ENCODE measurements at regions of chr7 and their contacts with region 1.

Region 1: DNA sequence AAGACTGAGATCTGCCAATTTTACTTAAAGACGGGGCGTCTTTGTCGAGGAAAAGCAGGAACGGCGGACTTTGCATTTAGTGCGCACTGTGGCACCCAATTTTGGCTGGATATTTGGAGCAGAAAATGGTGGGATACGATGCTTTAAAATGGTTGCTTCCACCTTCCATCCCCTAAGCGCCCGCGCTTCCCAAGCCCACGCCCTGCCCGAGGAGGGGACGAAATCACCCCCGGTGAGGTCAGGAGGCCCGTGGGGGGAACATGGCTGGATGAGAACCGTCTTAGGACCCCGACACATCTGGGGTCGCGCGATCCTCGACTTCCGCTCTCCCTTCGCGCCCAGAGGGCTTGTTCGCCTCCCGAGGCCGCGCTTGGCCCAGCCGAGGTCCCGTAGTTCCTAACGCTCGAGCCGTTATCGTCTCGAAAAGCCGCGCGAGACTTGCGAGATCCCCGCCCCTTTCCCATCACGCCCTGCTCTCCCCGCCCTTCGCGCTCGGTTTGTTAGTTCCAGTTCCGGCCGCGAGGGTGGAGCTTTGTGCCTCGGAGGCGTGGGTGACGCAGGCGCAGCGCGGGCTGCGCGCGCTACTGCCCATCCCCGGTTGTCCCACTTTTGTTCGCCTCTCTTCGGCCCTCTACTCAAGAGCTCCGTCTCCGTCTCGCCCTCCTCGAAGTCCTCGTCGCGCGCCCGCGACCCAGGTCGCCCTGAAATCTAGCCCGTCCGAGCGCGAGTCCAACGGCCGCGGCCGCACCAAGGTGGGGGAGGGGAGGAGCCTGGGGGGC is at the start of gene SRRT:
- DNase-seq: peak; percentile 99
- H3K4me3 Mint-ChIP-seq: peak within 1 kb of the TSS; percentile 98
- H3K27ac Mint-ChIP-seq: peak within 1 kb of the TSS; percentile 97
- H3K4me1 Mint-ChIP-seq: peaks cover 60% of the 10 kb centered on the region
- H3K27me3 Mint-ChIP-seq: no peaks in the 10 kb centered on the region
- total RNA-seq, gene SRRT: 202 to 205 TPM

Region 2: DNA sequence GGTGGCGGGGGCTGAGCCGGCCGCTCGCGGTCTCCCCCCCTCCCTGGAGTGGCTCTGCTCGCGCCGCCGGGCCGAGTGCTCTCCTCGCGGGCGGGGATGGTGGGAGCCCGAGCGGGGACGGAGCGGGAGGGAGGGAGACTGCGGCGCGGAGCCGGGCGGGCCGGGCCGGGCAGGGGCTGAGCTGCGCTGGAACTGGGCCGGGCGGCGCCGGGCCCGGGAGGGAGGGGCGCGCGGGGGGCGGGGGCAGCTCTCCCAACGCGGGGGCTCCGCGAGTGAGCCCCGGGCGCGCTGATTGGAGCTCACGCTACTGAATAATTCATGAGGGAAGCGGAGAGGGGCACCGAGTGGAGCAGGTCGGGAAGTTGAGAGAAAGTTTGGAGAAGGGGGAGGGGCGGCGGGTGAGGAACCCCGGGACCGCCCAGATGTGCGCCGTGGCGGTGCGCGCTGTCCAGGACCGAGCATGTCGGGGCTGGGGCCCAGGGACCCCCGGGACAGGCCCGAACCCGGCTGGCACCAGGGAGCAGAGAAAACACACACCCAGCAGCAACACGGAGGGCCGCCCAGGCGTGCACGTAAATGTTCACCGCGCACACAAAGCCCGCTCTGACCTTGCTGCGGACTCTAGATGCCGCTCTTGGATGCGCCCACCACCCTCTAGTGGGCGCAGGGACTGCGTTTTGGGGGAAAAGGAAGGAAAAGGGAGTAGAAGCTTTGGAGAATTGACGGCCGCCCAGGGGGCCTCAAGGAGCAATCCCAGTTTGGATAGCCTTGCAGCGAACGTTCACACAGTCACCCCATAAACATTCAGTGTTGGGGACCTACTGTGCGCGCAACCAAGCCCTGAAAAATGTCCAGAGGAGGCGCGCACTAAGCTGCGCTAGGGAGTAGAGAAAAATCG is 47.2 kb before region 1 on chr7 and contains the start of gene EPHB4:
- CTCF ChIA-PET with region 1: no interaction called
- POLR2A ChIA-PET with region 1: no interaction called
- DNase-seq: no peak
- H3K4me3 Mint-ChIP-seq: peak within 1 kb of the TSS; percentile 34
- H3K27ac Mint-ChIP-seq: no peak within 1 kb of the TSS
- H3K4me1 Mint-ChIP-seq: peaks cover 24% of the 10 kb centered on the region
- H3K27me3 Mint-ChIP-seq: peaks cover 51% of the 10 kb centered on the region
- total RNA-seq, gene EPHB4: 0.60 TPM

Region 3: DNA sequence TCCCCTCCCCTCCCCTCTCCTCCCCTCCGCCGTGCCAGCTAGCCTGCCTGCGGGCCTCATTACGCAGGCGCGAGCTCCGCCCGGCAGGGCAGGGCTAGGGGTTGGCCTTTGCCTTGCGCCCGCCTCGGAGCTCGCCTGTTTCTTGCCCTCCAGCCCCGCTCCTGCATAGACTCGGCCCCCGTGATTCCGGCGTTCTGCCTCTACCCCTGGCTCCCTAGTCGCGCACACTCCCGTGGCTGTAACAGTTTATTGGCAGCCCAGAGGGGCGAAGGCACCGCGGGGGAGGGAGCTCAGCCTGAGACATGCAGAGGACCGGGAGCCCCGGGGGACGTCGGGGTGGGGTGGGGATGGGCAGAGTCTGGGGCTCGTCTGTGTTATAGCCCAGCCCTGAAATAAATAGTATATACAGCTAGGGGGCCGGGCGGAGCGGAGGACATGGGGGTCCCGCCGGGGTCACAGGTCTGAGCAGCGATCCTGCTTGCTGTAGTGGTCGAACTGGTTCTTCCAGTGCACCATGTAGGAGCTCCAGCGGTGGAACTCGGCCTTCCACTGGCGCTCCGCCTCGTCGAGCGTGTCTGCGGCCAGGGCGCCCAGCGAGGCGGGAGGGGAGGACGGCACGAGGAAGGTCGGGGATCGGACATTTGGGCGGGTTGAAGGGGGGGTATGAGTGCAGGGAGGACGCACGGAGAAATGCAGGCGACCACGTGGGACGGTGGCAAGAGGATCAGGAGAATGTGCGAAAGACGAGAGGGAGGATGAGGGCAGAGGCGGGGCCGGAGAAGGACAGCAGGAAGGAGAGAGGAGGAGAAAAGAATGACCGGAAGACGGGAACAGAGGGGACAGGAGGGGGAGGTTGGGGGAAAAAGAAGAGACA is 15.2 kb after region 1 on chr7:
- CTCF ChIA-PET with region 1: interaction called, 9 read pairs
- POLR2A ChIA-PET with region 1: interaction called, 251 read pairs
- DNase-seq: peak; percentile 92
- H3K4me3 Mint-ChIP-seq: peak overlapping the region; percentile 78
- H3K27ac Mint-ChIP-seq: peak overlapping the region; percentile 16
- H3K4me1 Mint-ChIP-seq: peaks cover 52% of the 10 kb centered on the region
- H3K27me3 Mint-ChIP-seq: peaks cover 32% of the 10 kb centered on the region

Region 4: DNA sequence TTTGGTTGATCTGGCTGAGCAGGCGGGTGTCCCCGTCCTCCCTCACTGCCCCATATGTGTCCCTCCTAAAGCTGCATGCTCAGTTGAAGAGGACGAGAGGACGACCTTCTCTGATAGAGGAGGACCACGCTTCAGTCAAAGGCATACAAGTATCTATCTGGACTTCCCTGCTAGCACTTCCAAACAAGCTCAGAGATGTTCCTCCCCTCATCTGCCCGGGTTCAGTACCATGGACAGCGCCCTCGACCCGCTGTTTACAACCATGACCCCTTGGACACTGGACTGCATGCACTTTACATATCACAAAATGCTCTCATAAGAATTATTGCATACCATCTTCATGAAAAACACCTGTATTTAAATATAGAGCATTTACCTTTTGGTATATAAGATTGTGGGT is 183.6 kb after region 1 on chr7:
- CTCF ChIA-PET with region 1: no interaction called
- POLR2A ChIA-PET with region 1: no interaction called
- DNase-seq: peak; percentile 61
- H3K4me3 Mint-ChIP-seq: no peak overlapping the region
- H3K27ac Mint-ChIP-seq: no peak overlapping the region
- H3K4me1 Mint-ChIP-seq: no peaks in the 10 kb centered on the region
- H3K27me3 Mint-ChIP-seq: peaks cover 18% of the 10 kb centered on the region

Region 5: DNA sequence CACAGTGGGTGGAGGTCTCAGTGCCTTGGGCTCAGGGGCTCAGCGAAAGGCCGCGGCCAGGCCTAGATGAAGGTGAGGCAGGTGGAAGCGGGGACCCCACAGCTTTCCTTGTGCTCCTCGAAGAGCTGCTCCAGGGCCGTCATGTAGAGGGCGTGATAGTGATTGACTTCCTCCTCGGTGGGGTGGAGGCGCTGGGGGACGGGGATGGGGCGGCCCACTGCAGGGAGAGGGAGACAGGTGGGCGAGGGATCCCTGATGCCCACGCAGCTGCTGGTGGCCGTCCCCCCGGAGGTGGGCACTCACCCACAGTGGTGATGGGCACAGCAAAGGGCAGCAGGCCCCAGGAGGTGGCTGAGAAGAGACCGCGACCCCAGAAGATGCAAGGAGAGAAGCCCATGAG is 321.1 kb after region 1 on chr7:
- CTCF ChIA-PET with region 1: no interaction called
- POLR2A ChIA-PET with region 1: no interaction called
- DNase-seq: no peak
- H3K4me3 Mint-ChIP-seq: no peak overlapping the region
- H3K27ac Mint-ChIP-seq: no peak overlapping the region
- H3K4me1 Mint-ChIP-seq: peaks cover 8% of the 10 kb centered on the region
- H3K27me3 Mint-ChIP-seq: peaks cover 14% of the 10 kb centered on the region

Measured in activated CD4-positive, alpha-beta memory T cell treated with anti-CD3 and anti-CD28 coated beads, Interleukin-2, amount 10 ng/mL, durations not matched to agents 7 days and 5 days (primary cell).